WTC11 (cell line): ENCODE measurements at regions of chr14 and their contacts with region 1.

Region 1: GRCh38 chr14:76784266-76785264 is 23.3 kb downstream of the VASH1 start:
- DNase-seq: peak; percentile 91
- ATAC-seq: peak; percentile 99
- H3K4me3 Mint-ChIP-seq: no peak overlapping the region
- H3K27ac Mint-ChIP-seq: no peak overlapping the region
- H3K4me1 Mint-ChIP-seq: peaks cover 3% of the 10 kb centered on the region; the same call in 1 of the 2 replicates
- H3K27me3 Mint-ChIP-seq: peaks cover 2% of the 10 kb centered on the region; the same call in 1 of the 2 replicates
- CTCF ChIP-seq: peak; percentile 77

Region 2: GRCh38 chr14:76710056-76711010 is 74.2 kb before region 1 on chr14:
- CTCF ChIA-PET with region 1: interaction called, 124 read pairs
- POLR2A ChIA-PET with region 1: no interaction called
- DNase-seq: no peak
- ATAC-seq: peak; percentile 56
- H3K4me3 Mint-ChIP-seq: no peak overlapping the region
- H3K27ac Mint-ChIP-seq: no peak overlapping the region
- H3K4me1 Mint-ChIP-seq: peaks cover 4% of the 10 kb centered on the region; the same call in 1 of the 2 replicates
- H3K27me3 Mint-ChIP-seq: no peaks in the 10 kb centered on the region
- CTCF ChIP-seq: peak; percentile 65

Region 3: DNA sequence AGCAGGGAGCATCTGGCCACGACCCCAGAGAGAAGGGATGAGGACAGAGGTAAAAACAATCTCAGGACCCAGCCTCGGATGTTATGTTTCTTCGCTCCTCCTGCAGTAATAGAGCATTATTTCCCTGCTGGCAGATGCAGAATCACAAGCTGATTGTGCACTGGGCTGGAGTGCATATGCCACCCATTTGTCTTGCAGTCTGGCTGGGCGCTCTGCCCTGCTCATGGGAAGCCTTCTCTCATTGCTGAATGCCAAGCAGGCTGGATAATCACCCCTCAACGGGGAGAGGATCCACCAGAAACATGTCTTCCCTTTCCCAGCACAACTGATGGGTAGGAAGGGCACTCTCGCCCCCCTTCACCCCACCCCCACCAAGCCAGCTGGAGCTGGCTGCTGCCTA is 31.8 kb before region 1 on chr14:
- CTCF ChIA-PET with region 1: interaction called, 13 read pairs
- POLR2A ChIA-PET with region 1: no interaction called
- DNase-seq: no peak
- ATAC-seq: no peak
- H3K4me3 Mint-ChIP-seq: no peak overlapping the region
- H3K27ac Mint-ChIP-seq: no peak overlapping the region
- H3K4me1 Mint-ChIP-seq: no peaks in the 10 kb centered on the region
- H3K27me3 Mint-ChIP-seq: peaks cover 19% of the 10 kb centered on the region
- CTCF ChIP-seq: no peak

Region 4: GRCh38 chr14:76773188-76773885 is 11.2 kb before region 1 on chr14:
- CTCF ChIA-PET with region 1: interaction called, 46 read pairs
- POLR2A ChIA-PET with region 1: no interaction called
- DNase-seq: no peak
- ATAC-seq: peak; percentile 5; the same call in 1 of the 2 replicates
- H3K4me3 Mint-ChIP-seq: no peak overlapping the region
- H3K27ac Mint-ChIP-seq: no peak overlapping the region
- H3K4me1 Mint-ChIP-seq: peaks cover 23% of the 10 kb centered on the region
- H3K27me3 Mint-ChIP-seq: no peaks in the 10 kb centered on the region; the same call in 1 of the 2 replicates
- CTCF ChIP-seq: no peak

Region 5: GRCh38 chr14:76812211-76813044 is 27.9 kb after region 1 on chr14 and contains the start of gene ANGEL1:
- CTCF ChIA-PET with region 1: interaction called, 24 read pairs
- POLR2A ChIA-PET with region 1: no interaction called
- DNase-seq: peak; percentile 96
- ATAC-seq: peak; percentile 94
- H3K4me3 Mint-ChIP-seq: peak within 1 kb of the TSS; percentile 92
- H3K27ac Mint-ChIP-seq: peak within 1 kb of the TSS; percentile 55
- H3K4me1 Mint-ChIP-seq: peaks cover 16% of the 10 kb centered on the region
- H3K27me3 Mint-ChIP-seq: peaks cover 3% of the 10 kb centered on the region; the same call in 1 of the 2 replicates
- CTCF ChIP-seq: no peak
- total RNA-seq, gene ANGEL1: 25.7 to 29.7 TPM (median 25.8 TPM) in 3 replicates

Region 6: DNA sequence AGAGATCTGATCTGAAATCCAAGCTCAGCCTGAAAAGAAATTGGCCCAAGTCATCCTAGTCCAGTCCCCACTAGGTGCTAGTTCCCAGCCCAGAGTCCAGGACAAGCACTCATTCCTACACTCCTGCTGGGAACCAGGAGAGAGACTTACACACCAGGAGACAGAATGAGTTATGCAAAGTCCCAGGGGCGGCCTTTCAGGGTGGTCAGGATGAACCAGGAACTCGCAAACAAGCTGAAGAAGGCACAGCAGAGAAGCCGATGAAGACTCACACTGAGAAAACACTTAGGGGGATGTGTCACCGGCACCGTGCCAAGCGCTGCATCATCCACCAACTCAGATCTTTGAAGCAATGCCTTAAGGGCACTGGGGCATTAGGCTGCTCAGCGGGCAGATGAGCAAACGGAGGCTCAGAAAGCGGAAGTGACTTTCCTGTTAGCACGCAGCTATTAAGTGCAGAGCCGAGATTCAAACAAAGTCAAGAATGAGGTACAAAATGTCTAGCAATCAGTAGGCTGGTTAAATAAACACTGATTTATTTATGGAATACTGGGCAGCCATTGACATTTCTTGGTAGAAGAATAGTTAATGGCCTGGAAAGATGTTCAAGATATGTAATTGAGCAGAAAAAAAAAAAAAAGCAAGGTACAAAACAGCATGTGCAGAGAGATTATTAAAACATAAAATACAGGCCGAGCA is 120.3 kb after region 1 on chr14:
- CTCF ChIA-PET with region 1: no interaction called
- POLR2A ChIA-PET with region 1: no interaction called
- DNase-seq: no peak
- ATAC-seq: peak; percentile 44
- H3K4me3 Mint-ChIP-seq: no peak overlapping the region
- H3K27ac Mint-ChIP-seq: 0 out of 2 replicates have a peak overlapping the region, but pooled peaks have one; percentile 20
- H3K4me1 Mint-ChIP-seq: peaks cover 8% of the 10 kb centered on the region
- H3K27me3 Mint-ChIP-seq: no peaks in the 10 kb centered on the region
- CTCF ChIP-seq: no peak